Calu3 (cell line): ENCODE measurements at regions of chr3 and their contacts with region 1.

Region 1: GRCh38 chr3:43998836-43999727 is 242.6 kb upstream of the TOPAZ1 start:
- DNase-seq: peak; percentile 78
- H3K4me3 Mint-ChIP-seq: peak overlapping the region; percentile 73
- H3K27ac Mint-ChIP-seq: no peak overlapping the region
- H3K4me1 Mint-ChIP-seq: peaks cover 19% of the 10 kb centered on the region
- H3K27me3 Mint-ChIP-seq: peaks cover 43% of the 10 kb centered on the region
- CTCF ChIP-seq: no peak

Region 2: DNA sequence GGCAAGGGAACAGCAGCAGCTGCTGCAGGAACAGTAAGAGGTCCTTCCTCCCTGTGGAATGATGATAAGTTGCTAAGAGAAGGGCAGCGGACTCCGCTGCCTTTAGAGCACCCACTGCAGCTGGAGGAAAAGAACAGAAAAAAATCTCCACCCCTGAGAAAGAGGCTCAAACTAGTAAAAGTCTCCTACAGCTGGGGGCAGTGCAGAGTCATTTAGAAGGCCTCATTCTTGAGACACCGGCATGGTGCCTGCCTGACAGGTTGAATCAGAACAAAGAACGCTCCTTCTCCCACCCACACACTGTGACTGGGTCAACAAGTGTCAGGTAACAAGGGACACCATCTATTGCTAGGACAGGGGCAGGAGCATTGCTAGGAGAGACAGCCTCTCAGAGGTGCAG is 119.9 kb before region 1 on chr3:
- CTCF ChIA-PET with region 1: no interaction called
- intact Hi-C with region 1: loop called (anchors 5 kb)
- DNase-seq: peak; percentile 59
- H3K4me3 Mint-ChIP-seq: no peak overlapping the region
- H3K27ac Mint-ChIP-seq: no peak overlapping the region
- H3K4me1 Mint-ChIP-seq: peaks cover 14% of the 10 kb centered on the region
- H3K27me3 Mint-ChIP-seq: no peaks in the 10 kb centered on the region
- CTCF ChIP-seq: no peak

Region 3: GRCh38 chr3:44045476-44046275 is 46.6 kb after region 1 on chr3:
- CTCF ChIA-PET with region 1: no interaction called
- intact Hi-C with region 1: loop called (anchors 5 kb)
- DNase-seq: peak; percentile 83
- H3K4me3 Mint-ChIP-seq: no peak overlapping the region
- H3K27ac Mint-ChIP-seq: peak overlapping the region; percentile 44
- H3K4me1 Mint-ChIP-seq: peaks cover 39% of the 10 kb centered on the region
- H3K27me3 Mint-ChIP-seq: no peaks in the 10 kb centered on the region
- CTCF ChIP-seq: no peak

Region 4: DNA sequence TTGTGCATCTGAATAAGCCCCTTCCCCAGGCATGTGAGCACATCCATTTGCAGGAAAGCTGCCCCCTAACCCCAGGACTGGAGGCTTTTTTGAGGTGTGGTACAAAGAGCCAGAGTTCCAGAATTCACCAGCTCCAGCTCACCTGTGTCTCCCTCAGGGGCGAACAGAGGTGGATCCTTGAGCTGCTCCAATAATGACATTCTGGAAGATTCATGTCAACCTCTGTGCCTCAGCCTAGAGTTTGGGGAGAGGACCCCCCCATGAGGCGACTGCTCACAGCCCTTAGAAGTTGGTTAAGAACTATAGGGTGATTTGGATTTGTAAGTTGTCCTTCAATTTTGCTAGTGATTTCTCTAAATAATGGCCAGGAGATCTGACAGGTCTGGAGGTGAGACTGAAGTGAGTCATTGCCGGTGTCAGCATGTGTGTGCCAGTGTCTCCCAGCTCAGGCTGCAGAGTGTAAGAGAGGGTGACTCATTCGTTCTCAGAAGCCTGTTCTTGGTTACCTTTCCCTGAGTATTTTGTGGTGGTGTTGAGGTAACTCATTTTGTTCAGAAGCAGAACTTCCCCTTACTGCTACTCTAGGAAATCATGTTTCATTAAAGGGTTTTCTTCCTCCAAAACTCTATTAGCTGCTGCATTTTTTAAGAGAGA is 105.7 kb after region 1 on chr3:
- CTCF ChIA-PET with region 1: no interaction called
- intact Hi-C with region 1: loop called (anchors 5 kb)
- DNase-seq: peak; percentile 62
- H3K4me3 Mint-ChIP-seq: no peak overlapping the region
- H3K27ac Mint-ChIP-seq: no peak overlapping the region
- H3K4me1 Mint-ChIP-seq: peaks cover 16% of the 10 kb centered on the region
- H3K27me3 Mint-ChIP-seq: no peaks in the 10 kb centered on the region
- CTCF ChIP-seq: no peak